ENCODE measurements at regions of chr12 and their contacts with region 1.

Region 1: DNA sequence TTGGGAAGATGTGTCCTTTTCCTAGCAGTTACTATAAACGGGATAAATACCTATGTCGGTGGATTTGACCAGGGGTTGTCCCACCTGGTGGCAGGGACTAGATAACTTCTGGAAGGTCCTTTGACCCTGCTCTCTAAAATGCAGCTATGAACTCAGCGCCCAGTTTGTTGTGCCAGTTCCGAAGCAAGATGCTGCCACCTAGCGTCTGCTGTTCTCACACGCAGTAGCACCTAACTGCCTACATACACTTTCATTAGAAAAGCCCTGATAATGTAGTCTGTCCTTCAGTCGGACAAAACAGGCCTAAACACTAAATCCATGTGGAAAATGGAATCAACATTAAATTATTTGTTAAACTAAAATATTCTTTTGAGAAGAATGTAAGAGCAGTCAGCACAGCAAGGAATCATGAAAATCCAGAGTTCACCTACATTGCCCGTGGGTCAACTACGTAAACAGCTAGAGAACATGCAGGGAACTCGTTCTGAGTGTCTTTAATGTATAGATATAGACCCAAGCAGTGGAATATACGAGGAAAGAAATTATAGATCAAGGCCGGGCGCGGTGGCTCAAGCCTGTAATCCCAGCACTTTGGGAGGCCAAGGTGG is 51.1 kb upstream of the CRACR2A start:
- DNase-seq: peak; percentile 84
- ATAC-seq: peak; percentile 76
- H3K4me3 Mint-ChIP-seq: no peak overlapping the region
- H3K27ac Mint-ChIP-seq: no peak overlapping the region
- H3K4me1 Mint-ChIP-seq: no peaks in the 10 kb centered on the region
- H3K27me3 Mint-ChIP-seq: no peaks in the 10 kb centered on the region

Region 2: GRCh38 chr12:3313675-3314663 is 490.0 kb before region 1 on chr12:
- CTCF ChIA-PET with region 1: interaction called, 12 read pairs
- POLR2A ChIA-PET with region 1: no interaction called
- DNase-seq: peak; percentile 28
- ATAC-seq: peak; percentile 85
- H3K4me3 Mint-ChIP-seq: no peak overlapping the region
- H3K27ac Mint-ChIP-seq: no peak overlapping the region
- H3K4me1 Mint-ChIP-seq: no peaks in the 10 kb centered on the region
- H3K27me3 Mint-ChIP-seq: peaks cover 2% of the 10 kb centered on the region

Region 3: GRCh38 chr12:3658327-3659163 is 145.4 kb before region 1 on chr12:
- CTCF ChIA-PET with region 1: interaction called, 17 read pairs
- POLR2A ChIA-PET with region 1: no interaction called
- DNase-seq: peak; percentile 56
- ATAC-seq: no peak
- H3K4me3 Mint-ChIP-seq: no peak overlapping the region
- H3K27ac Mint-ChIP-seq: peak overlapping the region; percentile 47
- H3K4me1 Mint-ChIP-seq: no peaks in the 10 kb centered on the region
- H3K27me3 Mint-ChIP-seq: no peaks in the 10 kb centered on the region

Region 4: GRCh38 chr12:3770886-3771285 is 33.1 kb before region 1 on chr12:
- CTCF ChIA-PET with region 1: interaction called, 10 read pairs
- POLR2A ChIA-PET with region 1: no interaction called
- DNase-seq: no peak
- ATAC-seq: no peak
- H3K4me3 Mint-ChIP-seq: no peak overlapping the region
- H3K27ac Mint-ChIP-seq: no peak overlapping the region
- H3K4me1 Mint-ChIP-seq: peaks cover 9% of the 10 kb centered on the region
- H3K27me3 Mint-ChIP-seq: no peaks in the 10 kb centered on the region

Region 5: DNA sequence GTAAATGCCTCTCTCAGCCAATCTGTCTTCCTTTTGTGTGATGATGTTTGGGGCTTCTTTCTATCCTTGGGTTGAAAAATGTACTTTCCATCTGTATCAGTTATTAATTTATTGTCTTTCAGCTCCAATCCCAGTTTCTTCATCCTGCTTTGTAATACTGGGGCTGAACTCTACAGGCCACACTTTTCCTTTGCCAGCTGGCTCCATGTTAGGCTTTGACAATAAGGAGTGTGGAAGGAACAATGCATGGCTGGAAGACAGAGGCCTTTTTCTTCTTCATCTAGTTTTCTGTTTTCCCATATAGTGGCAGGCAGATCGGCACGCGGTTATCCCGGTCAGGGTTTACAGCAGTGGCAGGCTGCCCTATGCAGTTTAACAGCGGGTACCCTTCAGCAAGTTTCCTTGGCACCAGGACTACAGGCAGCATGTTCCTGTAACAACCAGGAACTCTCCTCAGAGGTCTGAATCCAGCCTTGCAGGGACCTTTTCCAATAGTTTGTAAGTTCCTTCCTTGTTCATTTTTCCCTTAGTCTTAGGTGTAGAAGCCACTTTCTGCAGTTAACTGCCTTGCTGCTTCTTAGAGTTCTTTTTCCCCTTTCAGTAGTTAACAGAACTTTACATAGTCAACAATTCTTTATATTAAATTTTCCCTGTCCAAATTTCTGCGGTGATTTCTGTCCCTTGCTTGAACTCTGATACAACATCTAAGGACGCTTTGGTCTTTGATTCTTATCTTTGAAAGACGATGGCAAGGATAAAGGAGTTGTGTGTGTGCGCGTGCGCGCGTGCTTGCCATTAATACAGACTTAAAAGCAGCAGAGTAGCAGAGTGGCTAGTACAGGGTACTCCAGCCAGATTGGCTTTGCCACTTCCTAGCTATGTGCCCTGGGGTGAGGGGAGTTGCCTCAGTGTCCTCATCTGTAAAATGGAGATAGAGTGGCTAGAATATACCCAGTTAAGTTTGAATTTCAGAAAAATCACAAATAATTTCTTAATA is 12.4 kb before region 1 on chr12:
- CTCF ChIA-PET with region 1: interaction called, 19 read pairs
- POLR2A ChIA-PET with region 1: no interaction called
- DNase-seq: no peak
- ATAC-seq: no peak
- H3K4me3 Mint-ChIP-seq: no peak overlapping the region
- H3K27ac Mint-ChIP-seq: no peak overlapping the region
- H3K4me1 Mint-ChIP-seq: no peaks in the 10 kb centered on the region
- H3K27me3 Mint-ChIP-seq: no peaks in the 10 kb centered on the region

Region 6: DNA sequence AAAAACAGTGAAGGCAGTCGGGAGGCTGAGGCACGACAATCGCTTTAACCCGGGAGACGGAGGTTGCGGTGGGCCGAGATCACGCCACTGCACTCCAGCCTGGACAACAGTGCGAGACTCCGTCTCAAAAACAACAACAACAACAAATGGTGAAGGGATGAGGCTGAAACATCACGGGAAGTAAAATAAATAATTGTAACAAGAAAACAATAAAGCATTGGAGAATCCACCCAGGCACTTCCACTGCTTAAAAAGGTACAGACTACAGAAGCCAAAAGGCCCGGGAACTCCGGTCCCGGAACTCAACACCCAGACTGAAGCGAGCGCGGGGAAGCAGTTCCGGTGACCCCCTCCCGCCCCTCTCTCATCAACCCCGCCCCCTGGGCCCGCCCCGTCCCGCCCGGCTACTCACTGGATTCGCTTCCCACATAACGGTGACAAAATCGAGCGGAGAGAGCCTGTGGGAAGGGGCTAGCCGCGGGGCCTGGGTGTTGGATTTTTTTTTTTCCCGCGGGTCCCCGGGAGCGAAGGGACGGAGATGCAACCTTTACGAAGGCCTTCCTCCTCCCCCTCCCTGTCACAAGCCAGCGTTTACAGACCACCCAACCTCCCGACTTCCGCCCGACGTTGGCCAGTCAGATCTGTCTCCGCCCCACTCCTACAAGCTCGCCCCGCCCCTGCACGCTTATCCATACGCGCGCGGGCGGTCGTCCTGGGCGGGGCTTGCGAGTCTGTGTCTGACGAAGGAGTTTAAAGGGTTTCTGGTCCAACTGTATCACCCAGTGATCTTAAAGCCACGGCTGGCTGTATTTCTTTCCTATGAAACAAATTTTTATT is 69.0 kb after region 1 on chr12 and contains the start of gene PARP11:
- CTCF ChIA-PET with region 1: no interaction called
- POLR2A ChIA-PET with region 1: no interaction called
- DNase-seq: peak; percentile 99
- ATAC-seq: peak; percentile 94
- H3K4me3 Mint-ChIP-seq: peak within 1 kb of the TSS; percentile 94
- H3K27ac Mint-ChIP-seq: peak within 1 kb of the TSS; percentile 97
- H3K4me1 Mint-ChIP-seq: peaks cover 41% of the 10 kb centered on the region
- H3K27me3 Mint-ChIP-seq: no peaks in the 10 kb centered on the region
- total RNA-seq, gene PARP11: 36.4 to 36.6 TPM

Measured in activated CD8-positive, alpha-beta T cell treated with anti-CD3 and anti-CD28 coated beads, Interleukin-2, amount 10 ng/mL, durations not matched to agents 7 days and 5 days (primary cell).